ENCODE measurements at regions of chr13 and their contacts with region 1.

Region 1: DNA sequence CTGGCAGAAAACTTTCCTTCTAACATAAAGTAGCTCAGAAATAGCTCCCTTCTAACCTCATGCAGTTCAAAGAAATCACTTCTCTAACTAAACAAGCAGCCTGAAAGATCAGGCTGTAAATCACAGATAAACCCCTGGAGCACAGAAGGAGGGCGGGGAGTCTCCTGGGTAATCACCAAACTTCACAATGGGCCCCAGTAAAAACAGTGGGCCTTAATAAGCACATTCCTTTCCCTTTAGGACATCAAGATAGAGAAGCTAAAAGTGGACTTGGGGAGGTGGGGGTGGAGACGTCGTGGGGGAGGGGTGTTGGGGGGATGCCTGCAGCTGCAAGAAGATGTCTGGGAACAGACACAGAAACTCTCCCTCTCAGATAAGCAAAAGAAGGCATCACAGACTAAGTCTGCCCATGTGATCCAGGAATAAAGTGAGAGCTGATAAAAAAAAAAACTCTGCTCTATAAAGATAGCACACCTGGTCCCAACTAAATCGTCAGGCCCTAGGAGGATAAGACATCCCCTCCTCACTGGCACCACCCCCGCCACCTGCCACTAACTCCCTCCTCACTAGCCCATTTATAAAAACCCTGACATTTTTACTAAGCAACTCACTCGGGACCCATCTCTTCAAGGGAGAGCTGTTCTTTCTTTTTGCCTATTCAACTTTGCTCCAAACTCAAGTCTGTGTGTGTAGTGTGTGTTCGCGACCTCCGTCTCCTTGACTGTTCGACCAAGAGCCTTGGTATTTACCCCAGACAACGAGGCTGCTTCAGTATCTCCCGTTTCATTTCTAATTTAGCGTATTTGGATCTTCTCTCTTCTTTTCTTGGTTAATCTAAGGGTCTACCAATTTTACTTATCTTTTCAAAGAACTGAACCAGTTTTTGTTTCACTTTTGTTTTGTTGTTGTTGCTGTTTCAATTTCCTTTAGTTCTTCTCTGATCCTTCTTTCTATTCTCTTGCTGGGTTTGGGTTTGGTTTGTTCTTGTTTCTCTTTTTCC is 31.7 kb downstream of the DNAJC15 start:
- DNase-seq: peak in 1 of 2 donors; percentile 52
- ATAC-seq: peak; percentile 65 to 73 (median 69)
- H3K4me3 ChIP-seq: peak overlapping the region; percentile 64
- H3K4me3 Mint-ChIP-seq: no peak overlapping the region
- H3K27ac ChIP-seq: peak overlapping the region; percentile 89
- H3K27ac Mint-ChIP-seq: no peak overlapping the region
- H3K4me1 ChIP-seq: peaks cover 23% of the 10 kb centered on the region
- H3K4me1 Mint-ChIP-seq: peaks cover 16 to 28% of the 10 kb centered on the region in 2 donors
- H3K27me3 ChIP-seq: no peaks in the 10 kb centered on the region
- H3K27me3 Mint-ChIP-seq: no peaks in the 10 kb centered on the region
- CTCF ChIP-seq: no peak

Region 2: GRCh38 chr13:42794577-42795275 is 260.4 kb before region 1 on chr13:
- intact Hi-C with region 1: no loop called
- DNase-seq: no peak
- ATAC-seq: no peak
- H3K4me3 ChIP-seq: no peak overlapping the region
- H3K4me3 Mint-ChIP-seq: no peak overlapping the region
- H3K27ac ChIP-seq: no peak overlapping the region
- H3K27ac Mint-ChIP-seq: no peak overlapping the region
- H3K4me1 ChIP-seq: no peaks in the 10 kb centered on the region
- H3K4me1 Mint-ChIP-seq: no peaks in the 10 kb centered on the region
- H3K27me3 ChIP-seq: peaks cover 2% of the 10 kb centered on the region
- H3K27me3 Mint-ChIP-seq: peaks cover 8 to 9% of the 10 kb centered on the region in 2 donors
- CTCF ChIP-seq: no peak

Region 3: GRCh38 chr13:42991892-42992763 is 63.0 kb before region 1 on chr13 and contains the start of gene EPSTI1:
- intact Hi-C with region 1: loop called (anchors 2 kb)
- DNase-seq: peak; percentile 68 to 87
- ATAC-seq: peak; percentile 86 to 91 (median 88)
- H3K4me3 ChIP-seq: peak within 1 kb of the TSS; percentile 92
- H3K4me3 Mint-ChIP-seq: peak within 1 kb of the TSS; percentile 95
- H3K27ac ChIP-seq: peak within 1 kb of the TSS; percentile 98
- H3K27ac Mint-ChIP-seq: peak within 1 kb of the TSS; percentile 98 to 99
- H3K4me1 ChIP-seq: peaks cover 23% of the 10 kb centered on the region
- H3K4me1 Mint-ChIP-seq: peaks cover 33 to 34% of the 10 kb centered on the region in 2 donors
- H3K27me3 ChIP-seq: no peaks in the 10 kb centered on the region
- H3K27me3 Mint-ChIP-seq: no peaks in the 10 kb centered on the region
- CTCF ChIP-seq: no peak
- total RNA-seq, gene EPSTI1: 23.4 to 57.4 (median 34.4) TPM

Region 4: GRCh38 chr13:43023289-43023951 is 31.7 kb before region 1 on chr13 and contains the start of gene DNAJC15:
- intact Hi-C with region 1: loop called (anchors 2 kb)
- DNase-seq: peak; percentile 83 to 88
- ATAC-seq: peak; percentile 89 to 92 (median 90)
- H3K4me3 ChIP-seq: peak within 1 kb of the TSS; percentile 71
- H3K4me3 Mint-ChIP-seq: peak within 1 kb of the TSS; percentile 94
- H3K27ac ChIP-seq: peak within 1 kb of the TSS; percentile 77
- H3K27ac Mint-ChIP-seq: peak within 1 kb of the TSS; percentile 91 to 99
- H3K4me1 ChIP-seq: peaks cover 22% of the 10 kb centered on the region
- H3K4me1 Mint-ChIP-seq: peaks cover 18 to 34% of the 10 kb centered on the region in 2 donors
- H3K27me3 ChIP-seq: no peaks in the 10 kb centered on the region
- H3K27me3 Mint-ChIP-seq: no peaks in the 10 kb centered on the region
- CTCF ChIP-seq: no peak
- total RNA-seq, gene DNAJC15: 7.7 to 10.0 (median 8.3) TPM

Region 5: GRCh38 chr13:43077461-43077860 is 22.4 kb after region 1 on chr13:
- intact Hi-C with region 1: no loop called
- DNase-seq: no peak
- ATAC-seq: no peak
- H3K4me3 ChIP-seq: no peak overlapping the region
- H3K4me3 Mint-ChIP-seq: no peak overlapping the region
- H3K27ac ChIP-seq: no peak overlapping the region
- H3K27ac Mint-ChIP-seq: no peak overlapping the region
- H3K4me1 ChIP-seq: no peaks in the 10 kb centered on the region
- H3K4me1 Mint-ChIP-seq: peaks cover 7 to 24% of the 10 kb centered on the region in 2 donors
- H3K27me3 ChIP-seq: no peaks in the 10 kb centered on the region
- H3K27me3 Mint-ChIP-seq: no peaks in the 10 kb centered on the region
- CTCF ChIP-seq: no peak

Region 6: GRCh38 chr13:43088093-43088511 is 33.0 kb after region 1 on chr13:
- intact Hi-C with region 1: no loop called
- DNase-seq: peak in 1 of 2 donors; percentile 33
- ATAC-seq: peak; percentile 73 to 87 (median 82)
- H3K4me3 ChIP-seq: peak overlapping the region; percentile 72
- H3K4me3 Mint-ChIP-seq: peak overlapping the region; percentile 96
- H3K27ac ChIP-seq: peak overlapping the region; percentile 97
- H3K27ac Mint-ChIP-seq: peak overlapping the region; percentile 96 to 97
- H3K4me1 ChIP-seq: no peaks in the 10 kb centered on the region
- H3K4me1 Mint-ChIP-seq: peaks cover 18 to 22% of the 10 kb centered on the region in 2 donors
- H3K27me3 ChIP-seq: no peaks in the 10 kb centered on the region
- H3K27me3 Mint-ChIP-seq: no peaks in the 10 kb centered on the region
- CTCF ChIP-seq: no peak

Region 7: GRCh38 chr13:43153436-43154097 is 98.5 kb after region 1 on chr13:
- intact Hi-C with region 1: no loop called
- DNase-seq: no peak
- ATAC-seq: no peak
- H3K4me3 ChIP-seq: no peak overlapping the region
- H3K4me3 Mint-ChIP-seq: no peak overlapping the region
- H3K27ac ChIP-seq: no peak overlapping the region
- H3K27ac Mint-ChIP-seq: no peak overlapping the region
- H3K4me1 ChIP-seq: no peaks in the 10 kb centered on the region
- H3K4me1 Mint-ChIP-seq: no peaks in the 10 kb centered on the region
- H3K27me3 ChIP-seq: no peaks in the 10 kb centered on the region
- H3K27me3 Mint-ChIP-seq: peaks cover 2 to 8% of the 10 kb centered on the region in 2 donors
- CTCF ChIP-seq: no peak